ENCODE measurements at regions of chr14 and their contacts with region 1.

Region 1: DNA sequence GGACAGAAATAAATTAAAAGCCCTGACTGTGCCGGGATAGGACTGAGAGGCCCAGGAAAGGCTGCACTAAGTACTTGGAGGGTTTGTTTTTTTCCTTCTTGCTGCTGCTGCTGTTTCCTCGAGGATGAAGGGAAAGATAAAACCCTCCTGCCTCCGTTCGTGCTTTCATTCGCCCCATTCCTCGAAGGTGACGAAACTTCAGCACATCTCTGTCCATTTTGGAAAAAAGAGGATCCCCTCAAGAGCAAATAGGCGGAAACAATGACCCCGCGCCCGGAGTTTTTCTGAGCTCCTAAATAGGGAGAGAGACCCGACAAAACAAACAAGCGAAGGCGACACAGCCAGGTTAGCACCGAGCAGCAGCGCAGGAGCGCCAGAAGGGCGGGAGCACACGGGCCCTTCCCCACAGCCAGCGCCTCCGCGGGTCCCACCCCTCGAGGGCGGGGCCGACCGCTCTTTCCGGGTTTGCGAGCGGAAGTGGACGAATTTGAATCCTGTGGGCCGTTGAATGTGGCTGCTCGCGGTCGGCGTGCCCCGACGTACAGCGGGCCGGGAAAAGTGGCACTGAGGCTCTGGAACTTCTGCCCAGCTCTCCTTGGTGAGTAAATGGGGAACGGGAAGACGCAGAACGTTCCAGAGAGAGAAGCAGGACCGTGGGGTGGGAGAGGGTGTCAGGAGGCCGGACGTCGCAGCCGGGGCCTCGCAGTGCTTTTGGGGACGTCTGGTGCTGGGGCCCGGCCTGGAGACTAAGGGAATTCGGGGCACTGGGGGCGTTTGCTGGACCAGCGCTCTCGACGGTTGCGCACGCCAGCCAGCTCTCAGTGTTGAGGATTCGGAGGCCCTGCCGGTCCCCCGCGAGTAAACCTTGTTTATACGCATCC is at the start of gene G2E3:
- DNase-seq: peak; percentile 93
- ATAC-seq: peak; percentile 95
- H3K4me3 ChIP-seq: peak within 1 kb of the TSS; percentile 96
- H3K27ac ChIP-seq: peak within 1 kb of the TSS; percentile 72
- H3K4me1 ChIP-seq: peaks cover 28% of the 10 kb centered on the region
- H3K27me3 ChIP-seq: no peaks in the 10 kb centered on the region
- CTCF ChIP-seq: no peak
- total RNA-seq, gene G2E3: 27.8 and 32.8 TPM in 2 replicates

Region 2: DNA sequence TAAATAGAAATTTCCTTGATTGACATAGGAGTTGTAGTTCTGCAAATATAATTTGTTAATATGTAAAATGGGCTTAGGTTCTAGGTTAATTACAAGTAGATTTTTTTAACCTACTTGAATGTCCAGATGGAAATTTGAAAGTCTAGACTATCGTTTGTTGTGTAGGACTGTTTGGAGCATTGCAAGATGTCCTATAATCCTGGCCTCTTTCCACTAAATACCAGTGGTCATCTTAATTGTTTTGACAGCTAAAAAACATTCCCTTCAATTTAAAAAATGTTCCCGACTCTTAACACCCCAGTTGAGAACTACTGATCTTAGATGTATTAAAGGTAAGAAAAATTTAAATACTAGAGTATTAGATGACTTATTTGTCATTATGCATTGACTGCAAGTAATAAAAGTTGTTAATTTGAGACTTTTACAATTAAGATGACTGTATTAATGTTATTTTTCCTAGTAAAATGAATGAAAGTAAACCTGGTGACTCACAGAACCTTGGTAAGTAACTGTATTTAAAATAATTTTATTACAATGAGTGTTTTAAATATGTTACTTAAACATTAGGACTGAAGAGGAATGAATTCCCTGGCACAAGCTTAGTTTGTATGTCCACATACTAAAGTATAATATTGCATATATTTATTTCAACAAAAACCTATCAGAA is 21.8 kb after region 1 on chr14:
- CTCF ChIA-PET with region 1: no interaction called
- POLR2A ChIA-PET with region 1: no interaction called
- intact Hi-C with region 1: loop called (anchors 2 kb)
- DNase-seq: no peak
- ATAC-seq: peak; percentile 86
- H3K4me3 ChIP-seq: no peak overlapping the region
- H3K27ac ChIP-seq: 0 out of 2 replicates have a peak overlapping the region, but pooled peaks have one; percentile 16
- H3K4me1 ChIP-seq: 0 out of 2 replicates have a peak, but pooled peaks cover 4% of the 10 kb centered on the region
- H3K27me3 ChIP-seq: no peaks in the 10 kb centered on the region
- CTCF ChIP-seq: no peak

Region 3: DNA sequence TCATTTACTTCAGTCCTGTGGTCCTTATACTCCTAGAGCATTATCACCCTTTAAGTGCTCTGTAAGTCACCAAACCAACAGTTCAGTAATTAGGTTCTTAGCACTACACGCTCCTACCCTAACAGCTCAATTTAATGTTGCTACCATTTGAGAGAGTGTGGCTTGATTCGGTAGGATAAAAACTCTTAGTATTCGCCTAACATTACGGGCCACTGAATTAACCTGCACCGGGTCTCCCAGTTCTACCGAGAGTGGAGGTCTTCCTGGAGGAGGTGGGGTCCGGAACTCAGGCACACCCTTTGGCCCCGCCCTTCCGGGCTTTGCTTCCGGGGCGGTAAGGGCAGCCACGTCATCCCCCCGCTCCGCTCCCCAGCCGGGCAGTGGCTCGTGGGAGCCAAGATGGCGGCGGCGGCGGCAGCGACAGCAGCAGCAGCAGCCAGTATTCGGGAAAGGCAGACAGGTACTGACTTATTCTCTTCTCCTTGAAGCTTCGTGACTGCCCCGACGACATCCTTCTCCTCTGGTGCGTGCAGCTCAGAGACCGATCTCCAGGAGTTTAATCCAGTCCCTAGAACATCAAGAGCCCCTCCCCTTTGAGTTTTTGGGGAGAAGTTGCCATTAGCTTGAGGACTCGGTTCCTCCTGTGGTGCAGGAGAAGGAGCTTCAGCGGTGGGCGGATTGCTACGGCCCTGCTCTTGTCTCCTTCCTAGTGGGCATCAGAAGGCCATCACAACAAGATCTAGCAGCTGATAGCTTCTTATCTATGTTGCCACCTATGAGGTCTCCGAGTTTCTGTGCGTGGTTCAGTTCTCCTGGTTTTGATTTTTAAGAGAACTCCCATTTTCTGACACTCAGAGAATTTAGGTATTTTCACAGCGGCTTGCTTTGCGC is 63.3 kb after region 1 on chr14 and contains the start of gene SCFD1:
- CTCF ChIA-PET with region 1: no interaction called
- POLR2A ChIA-PET with region 1: no interaction called
- intact Hi-C with region 1: loop called (anchors 2 kb)
- DNase-seq: peak; percentile 93
- ATAC-seq: peak; percentile 90
- H3K4me3 ChIP-seq: peak within 1 kb of the TSS; percentile 81
- H3K27ac ChIP-seq: peak within 1 kb of the TSS; percentile 75
- H3K4me1 ChIP-seq: peaks cover 32% of the 10 kb centered on the region
- H3K27me3 ChIP-seq: no peaks in the 10 kb centered on the region
- CTCF ChIP-seq: no peak
- total RNA-seq, gene SCFD1: 53.0 and 72.3 TPM in 2 replicates

Region 4: DNA sequence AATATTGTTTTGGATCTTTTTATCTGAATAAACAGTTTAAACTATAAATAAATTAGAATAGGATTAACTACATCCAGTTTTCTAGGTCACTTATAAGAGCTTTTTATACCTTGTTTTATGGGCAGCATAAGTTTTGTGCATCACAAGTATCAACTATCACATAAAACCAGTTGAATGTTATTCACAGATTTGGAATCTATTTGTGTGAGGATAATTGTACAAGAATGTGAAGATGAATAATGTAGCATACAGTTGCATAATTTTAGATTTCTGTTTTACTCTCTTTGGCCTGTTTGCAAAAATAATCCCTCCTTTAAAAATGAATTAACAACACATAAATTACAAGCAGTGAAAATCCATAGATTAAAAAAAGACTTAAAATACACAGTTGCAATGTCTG is 152.0 kb after region 1 on chr14:
- CTCF ChIA-PET with region 1: no interaction called
- POLR2A ChIA-PET with region 1: no interaction called
- intact Hi-C with region 1: no loop called
- DNase-seq: no peak
- ATAC-seq: no peak
- H3K4me3 ChIP-seq: no peak overlapping the region
- H3K27ac ChIP-seq: no peak overlapping the region
- H3K4me1 ChIP-seq: no peaks in the 10 kb centered on the region
- H3K27me3 ChIP-seq: no peaks in the 10 kb centered on the region
- CTCF ChIP-seq: no peak